ENCODE measurements at regions of chrX and their contacts with region 1.

Region 1: GRCh38 chrX:106481341-106481740 is 130.4 kb upstream of the RADX start:
- DNase-seq: peak; percentile 16
- ATAC-seq: no peak
- H3K4me3 Mint-ChIP-seq: no peak overlapping the region
- H3K27ac Mint-ChIP-seq: no peak overlapping the region
- H3K4me1 Mint-ChIP-seq: peaks cover 23% of the 10 kb centered on the region
- H3K27me3 Mint-ChIP-seq: no peaks in the 10 kb centered on the region
- CTCF ChIP-seq: peak; percentile 65

Region 2: GRCh38 chrX:106397801-106398538 is 83.4 kb before region 1 on chrX:
- CTCF ChIA-PET with region 1: no interaction called
- POLR2A ChIA-PET with region 1: no interaction called
- intact Hi-C with region 1: no loop called
- DNase-seq: no peak
- ATAC-seq: no peak
- H3K4me3 Mint-ChIP-seq: no peak overlapping the region
- H3K27ac Mint-ChIP-seq: no peak overlapping the region
- H3K4me1 Mint-ChIP-seq: no peaks in the 10 kb centered on the region
- H3K27me3 Mint-ChIP-seq: no peaks in the 10 kb centered on the region
- CTCF ChIP-seq: no peak

Region 3: DNA sequence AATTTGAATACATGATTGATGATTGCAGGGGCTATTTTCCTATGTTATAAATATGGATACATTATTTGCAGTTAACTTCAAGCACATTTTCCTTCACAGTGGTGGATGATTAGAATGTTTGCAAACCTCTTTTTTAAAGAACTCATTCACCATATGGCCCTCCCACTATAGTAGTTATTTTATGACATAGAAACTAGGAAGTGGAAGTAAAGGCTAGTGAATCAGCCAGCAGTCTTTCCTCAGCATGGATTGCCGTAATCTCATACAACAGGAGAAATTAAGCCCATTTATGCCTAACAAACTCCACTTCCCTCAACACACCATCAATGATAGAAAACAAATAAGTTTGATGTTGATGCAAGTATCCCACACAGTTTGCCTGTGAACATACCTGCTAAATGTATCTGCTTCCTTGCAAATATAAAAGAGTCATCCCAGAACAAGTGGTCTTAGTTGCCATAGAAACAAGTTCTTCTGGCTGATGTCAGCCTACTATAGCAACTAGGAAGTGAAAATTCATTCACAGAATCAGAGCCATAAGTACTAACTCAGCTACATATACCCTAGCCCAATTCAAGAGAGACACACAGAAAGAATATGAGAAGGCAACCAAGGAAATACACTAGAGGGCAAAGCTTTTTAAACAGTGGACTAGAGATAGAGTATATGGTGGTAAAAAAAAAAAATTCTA is 29.5 kb after region 1 on chrX:
- CTCF ChIA-PET with region 1: no interaction called
- POLR2A ChIA-PET with region 1: no interaction called
- intact Hi-C with region 1: no loop called
- DNase-seq: no peak
- ATAC-seq: no peak
- H3K4me3 Mint-ChIP-seq: no peak overlapping the region
- H3K27ac Mint-ChIP-seq: no peak overlapping the region
- H3K4me1 Mint-ChIP-seq: peaks cover 6% of the 10 kb centered on the region
- H3K27me3 Mint-ChIP-seq: no peaks in the 10 kb centered on the region
- CTCF ChIP-seq: no peak

Region 4: DNA sequence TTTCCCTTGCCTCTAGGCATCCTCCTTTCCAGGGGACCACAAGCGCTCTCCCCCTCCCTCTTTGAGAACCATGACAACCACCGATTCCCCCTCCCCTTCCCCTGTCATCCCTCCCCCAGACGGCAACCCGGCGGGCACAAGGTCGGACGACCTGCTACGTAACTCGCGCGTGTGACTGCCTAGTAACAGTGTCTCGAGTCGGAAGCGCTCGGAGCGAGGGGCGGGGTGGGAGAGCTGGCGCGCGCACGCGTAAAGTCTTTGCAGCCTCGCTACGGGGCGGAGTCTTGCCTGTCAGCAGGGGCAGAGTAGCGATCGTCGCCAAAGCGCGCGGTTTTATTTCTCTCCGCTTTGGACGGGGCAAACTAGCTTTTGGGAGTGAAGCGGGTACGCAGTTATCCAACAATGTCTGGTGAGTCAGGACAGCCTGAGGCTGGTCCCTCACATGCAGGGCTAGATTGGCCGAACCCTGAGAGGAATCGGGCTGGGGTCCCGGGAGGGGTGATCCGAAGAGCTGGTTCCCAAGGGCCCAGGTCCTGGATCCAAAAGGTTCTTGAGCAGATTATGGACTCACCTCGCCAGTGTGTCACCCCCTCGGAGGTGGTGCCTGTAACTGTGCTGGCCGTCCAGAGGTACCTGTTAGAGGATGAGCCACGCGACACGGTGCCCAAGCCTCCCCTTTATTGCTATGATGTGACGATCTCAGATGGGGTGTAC is 130.5 kb after region 1 on chrX and contains the start of gene RADX:
- CTCF ChIA-PET with region 1: interaction called, 4 read pairs
- POLR2A ChIA-PET with region 1: no interaction called
- intact Hi-C with region 1: loop called (anchors 5 kb)
- DNase-seq: peak; percentile 88
- ATAC-seq: peak; percentile 98
- H3K4me3 Mint-ChIP-seq: peak within 1 kb of the TSS; percentile 79
- H3K27ac Mint-ChIP-seq: peak within 1 kb of the TSS; percentile 85
- H3K4me1 Mint-ChIP-seq: peaks cover 16% of the 10 kb centered on the region
- H3K27me3 Mint-ChIP-seq: no peaks in the 10 kb centered on the region
- CTCF ChIP-seq: no peak
- total RNA-seq, gene RADX: 5.6 to 7.4 TPM

Region 5: GRCh38 chrX:106619797-106620196 is 138.5 kb after region 1 on chrX:
- CTCF ChIA-PET with region 1: interaction called, 27 read pairs
- POLR2A ChIA-PET with region 1: no interaction called
- intact Hi-C with region 1: loop called (anchors 5 kb)
- DNase-seq: no peak
- ATAC-seq: no peak
- H3K4me3 Mint-ChIP-seq: no peak overlapping the region
- H3K27ac Mint-ChIP-seq: no peak overlapping the region
- H3K4me1 Mint-ChIP-seq: no peaks in the 10 kb centered on the region
- H3K27me3 Mint-ChIP-seq: no peaks in the 10 kb centered on the region
- CTCF ChIP-seq: peak; percentile 32

Region 6: GRCh38 chrX:106791495-106791894 is 310.2 kb after region 1 on chrX:
- CTCF ChIA-PET with region 1: interaction called, 5 read pairs
- POLR2A ChIA-PET with region 1: no interaction called
- intact Hi-C with region 1: loop called (anchors 5 kb)
- DNase-seq: no peak
- ATAC-seq: no peak
- H3K4me3 Mint-ChIP-seq: no peak overlapping the region
- H3K27ac Mint-ChIP-seq: no peak overlapping the region
- H3K4me1 Mint-ChIP-seq: no peaks in the 10 kb centered on the region
- H3K27me3 Mint-ChIP-seq: peaks cover 1% of the 10 kb centered on the region
- CTCF ChIP-seq: no peak

Measured in activated CD8-positive, alpha-beta T cell treated with anti-CD3 and anti-CD28 coated beads for 36 hours (primary cell).